ENCODE measurements at regions of chr5 and their contacts with region 1.

Region 1: GRCh38 chr5:103139264-103139865 is 19.3 kb downstream of the PPIP5K2 start:
- DNase-seq: peak; percentile 87
- H3K4me3 Mint-ChIP-seq: no peak overlapping the region
- H3K27ac Mint-ChIP-seq: no peak overlapping the region
- H3K4me1 Mint-ChIP-seq: no peaks in the 10 kb centered on the region
- H3K27me3 Mint-ChIP-seq: no peaks in the 10 kb centered on the region
- CTCF ChIP-seq: peak; percentile 95

Region 2: GRCh38 chr5:102875721-102876123 is 263.6 kb before region 1 on chr5:
- CTCF ChIA-PET with region 1: no interaction called
- POLR2A ChIA-PET with region 1: no interaction called
- intact Hi-C with region 1: no loop called
- DNase-seq: no peak
- H3K4me3 Mint-ChIP-seq: no peak overlapping the region
- H3K27ac Mint-ChIP-seq: no peak overlapping the region
- H3K4me1 Mint-ChIP-seq: no peaks in the 10 kb centered on the region
- H3K27me3 Mint-ChIP-seq: no peaks in the 10 kb centered on the region
- CTCF ChIP-seq: no peak

Region 3: GRCh38 chr5:102971697-102972293 is 167.6 kb before region 1 on chr5:
- CTCF ChIA-PET with region 1: no interaction called
- POLR2A ChIA-PET with region 1: no interaction called
- intact Hi-C with region 1: loop called (anchors 1 kb)
- DNase-seq: peak; percentile 11
- H3K4me3 Mint-ChIP-seq: no peak overlapping the region
- H3K27ac Mint-ChIP-seq: no peak overlapping the region
- H3K4me1 Mint-ChIP-seq: no peaks in the 10 kb centered on the region
- H3K27me3 Mint-ChIP-seq: no peaks in the 10 kb centered on the region
- CTCF ChIP-seq: peak; percentile 32

Region 4: GRCh38 chr5:103041071-103041676 is 98.2 kb before region 1 on chr5:
- CTCF ChIA-PET with region 1: interaction called, 5 read pairs
- POLR2A ChIA-PET with region 1: no interaction called
- intact Hi-C with region 1: loop called (anchors 1 kb)
- DNase-seq: peak; percentile 59
- H3K4me3 Mint-ChIP-seq: no peak overlapping the region
- H3K27ac Mint-ChIP-seq: no peak overlapping the region
- H3K4me1 Mint-ChIP-seq: no peaks in the 10 kb centered on the region
- H3K27me3 Mint-ChIP-seq: no peaks in the 10 kb centered on the region
- CTCF ChIP-seq: peak; percentile 53

Measured in MCF 10A (cell line).